A673 (cell line): ENCODE measurements at regions of chr1 and their contacts with region 1.

Region 1: DNA sequence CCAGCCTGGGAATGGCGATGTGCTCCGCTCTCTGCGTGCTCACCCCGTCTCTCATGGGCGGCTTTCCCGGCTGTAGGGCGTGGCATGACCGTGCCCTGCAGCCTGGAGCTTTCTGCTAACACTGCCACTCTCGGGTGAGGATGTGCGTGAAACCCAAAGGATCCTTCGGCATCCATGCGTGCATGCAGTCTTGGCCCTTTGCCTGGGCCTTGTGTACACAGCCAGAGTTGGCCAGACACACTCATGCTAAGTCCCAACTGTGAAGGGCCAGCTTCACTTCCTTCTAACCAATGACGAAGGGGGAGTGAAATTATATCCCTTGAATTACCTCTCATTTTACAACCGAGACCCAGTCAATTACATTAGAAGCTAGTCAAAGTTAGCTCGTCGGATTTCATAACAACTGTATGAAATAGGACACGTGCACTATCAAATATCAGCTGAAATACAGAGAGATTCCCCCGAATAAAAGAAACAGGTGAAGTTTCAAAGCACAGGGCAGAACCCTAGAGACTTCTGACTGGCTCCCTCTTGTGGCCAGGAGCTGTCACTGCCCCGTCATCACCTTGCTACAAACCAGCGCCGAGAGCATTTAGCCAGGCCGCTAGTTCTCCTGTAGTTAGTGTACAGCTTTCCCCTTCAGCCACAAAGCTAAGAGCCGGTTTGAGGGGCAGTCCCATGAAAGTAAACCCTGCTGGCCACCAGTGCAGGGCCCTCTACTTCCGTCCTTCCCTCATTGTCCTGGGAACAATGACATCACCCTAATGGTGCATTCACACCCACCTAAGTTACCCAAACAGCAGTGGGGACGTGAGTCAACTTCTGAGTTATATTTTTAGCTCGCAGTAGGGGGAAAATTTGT is 63.4 kb upstream of the COA6 start:
- DNase-seq: peak; percentile 69
- H3K4me3 ChIP-seq: no peak overlapping the region
- H3K27ac ChIP-seq: peak overlapping the region; percentile 51
- H3K4me1 ChIP-seq: peaks cover 23% of the 10 kb centered on the region
- H3K27me3 ChIP-seq: no peaks in the 10 kb centered on the region
- CTCF ChIP-seq: peak; percentile 98

Region 2: GRCh38 chr1:233587958-233588799 is 721.6 kb before region 1 on chr1:
- CTCF ChIA-PET with region 1: no interaction called
- POLR2A ChIA-PET with region 1: no interaction called
- intact Hi-C with region 1: no loop called
- DNase-seq: no peak
- H3K4me3 ChIP-seq: no peak overlapping the region
- H3K27ac ChIP-seq: no peak overlapping the region
- H3K4me1 ChIP-seq: no peaks in the 10 kb centered on the region
- H3K27me3 ChIP-seq: peaks cover 23% of the 10 kb centered on the region
- CTCF ChIP-seq: no peak

Region 3: DNA sequence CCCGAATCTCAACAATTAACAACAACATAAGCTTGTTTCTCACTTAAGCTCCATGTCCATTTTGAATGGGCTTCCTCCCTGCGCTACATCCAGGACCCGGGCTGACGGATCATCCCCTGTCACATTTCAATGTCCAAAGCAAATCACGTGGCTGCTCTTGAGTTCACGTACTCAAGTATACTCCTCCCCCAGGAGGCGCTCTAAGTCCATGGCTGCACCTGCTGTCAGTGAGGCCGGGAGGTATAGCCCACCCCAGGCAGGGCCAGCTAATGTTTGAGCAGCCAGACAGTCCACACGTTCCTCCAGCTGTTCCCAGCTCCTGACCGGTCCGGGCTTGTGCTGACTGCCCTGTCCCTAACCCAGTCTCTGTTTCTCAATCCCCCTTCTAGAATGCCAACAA is 184.5 kb before region 1 on chr1:
- CTCF ChIA-PET with region 1: interaction called, 11 read pairs
- POLR2A ChIA-PET with region 1: no interaction called
- intact Hi-C with region 1: no loop called
- DNase-seq: peak; percentile 67
- H3K4me3 ChIP-seq: no peak overlapping the region
- H3K27ac ChIP-seq: no peak overlapping the region
- H3K4me1 ChIP-seq: no peaks in the 10 kb centered on the region
- H3K27me3 ChIP-seq: no peaks in the 10 kb centered on the region
- CTCF ChIP-seq: peak; percentile 64

Region 4: GRCh38 chr1:234154320-234155251 is 155.2 kb before region 1 on chr1:
- CTCF ChIA-PET with region 1: no interaction called
- POLR2A ChIA-PET with region 1: no interaction called
- intact Hi-C with region 1: loop called (anchors 2 kb)
- DNase-seq: peak; percentile 90
- H3K4me3 ChIP-seq: no peak overlapping the region
- H3K27ac ChIP-seq: no peak overlapping the region
- H3K4me1 ChIP-seq: no peaks in the 10 kb centered on the region
- H3K27me3 ChIP-seq: no peaks in the 10 kb centered on the region
- CTCF ChIP-seq: peak; percentile 76

Region 5: DNA sequence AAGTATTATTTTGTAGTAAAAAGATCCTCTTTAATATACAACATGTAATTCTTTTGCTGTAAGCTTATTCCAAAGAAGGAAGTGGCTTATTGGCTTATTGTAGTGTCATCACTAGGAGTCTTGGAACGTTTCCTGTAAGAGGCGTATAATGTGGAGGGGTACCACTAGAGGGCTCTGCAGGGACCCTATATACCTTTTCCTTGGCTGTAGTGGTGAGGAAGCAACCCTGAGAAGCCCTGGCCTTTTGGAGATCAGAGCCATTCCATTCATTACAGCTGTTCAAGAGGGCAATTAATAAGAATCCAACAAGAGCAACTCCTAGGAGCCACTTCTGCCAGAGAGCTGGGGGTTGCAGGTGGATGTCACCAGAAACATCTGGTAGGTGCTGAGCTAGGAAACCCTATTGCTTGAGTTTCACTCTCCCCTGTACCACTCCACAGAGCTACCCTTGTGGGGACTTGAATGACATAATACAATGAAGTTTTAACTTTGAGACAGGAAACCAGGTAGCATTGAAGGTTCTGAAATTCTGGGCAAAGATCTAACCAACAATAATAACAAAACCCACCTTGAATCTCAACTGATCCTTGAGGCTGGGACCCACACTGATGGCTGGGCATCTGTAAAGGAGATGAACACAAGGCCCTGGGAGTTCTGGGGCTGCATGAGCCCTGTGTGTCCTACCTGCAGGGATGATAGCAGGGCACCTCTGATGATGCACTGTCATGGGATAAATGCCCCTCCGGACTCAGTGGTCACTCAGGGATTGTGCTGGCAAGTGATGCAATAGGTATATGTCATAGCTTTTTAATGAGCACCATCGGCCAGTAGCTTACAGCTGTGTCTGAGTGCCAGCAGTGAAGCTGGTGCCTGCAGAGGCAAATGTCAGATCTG is 96.8 kb before region 1 on chr1:
- CTCF ChIA-PET with region 1: interaction called, 28 read pairs
- POLR2A ChIA-PET with region 1: no interaction called
- intact Hi-C with region 1: no loop called
- DNase-seq: peak; percentile 93
- H3K4me3 ChIP-seq: peak overlapping the region; percentile 83
- H3K27ac ChIP-seq: peak overlapping the region; percentile 66
- H3K4me1 ChIP-seq: peaks cover 40% of the 10 kb centered on the region
- H3K27me3 ChIP-seq: no peaks in the 10 kb centered on the region
- CTCF ChIP-seq: peak; percentile 95

Region 6: DNA sequence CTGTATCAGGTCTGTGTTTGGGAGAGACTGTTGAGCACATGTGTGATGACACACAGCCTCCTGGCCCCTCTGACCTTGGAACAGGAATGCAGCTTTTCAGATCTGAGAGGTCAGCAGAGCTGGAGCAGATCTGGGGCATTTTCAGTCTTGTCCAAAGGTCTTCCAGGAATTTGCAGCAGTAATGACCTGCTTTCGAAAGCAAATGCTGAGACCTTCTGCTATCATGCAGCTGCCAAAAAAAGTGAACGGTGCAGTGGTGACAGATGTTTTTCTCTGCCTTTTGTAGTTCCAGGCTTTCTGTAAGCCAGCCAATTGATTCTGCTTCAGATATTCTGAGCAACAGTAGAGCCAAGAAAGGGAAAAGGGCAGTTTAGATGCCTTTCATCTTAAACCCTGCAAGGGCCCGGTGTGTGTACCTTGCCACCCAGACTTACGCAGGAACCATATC is 74.4 kb before region 1 on chr1:
- CTCF ChIA-PET with region 1: no interaction called
- POLR2A ChIA-PET with region 1: no interaction called
- intact Hi-C with region 1: no loop called
- DNase-seq: no peak
- H3K4me3 ChIP-seq: no peak overlapping the region
- H3K27ac ChIP-seq: no peak overlapping the region
- H3K4me1 ChIP-seq: no peaks in the 10 kb centered on the region
- H3K27me3 ChIP-seq: no peaks in the 10 kb centered on the region
- CTCF ChIP-seq: no peak

Region 7: DNA sequence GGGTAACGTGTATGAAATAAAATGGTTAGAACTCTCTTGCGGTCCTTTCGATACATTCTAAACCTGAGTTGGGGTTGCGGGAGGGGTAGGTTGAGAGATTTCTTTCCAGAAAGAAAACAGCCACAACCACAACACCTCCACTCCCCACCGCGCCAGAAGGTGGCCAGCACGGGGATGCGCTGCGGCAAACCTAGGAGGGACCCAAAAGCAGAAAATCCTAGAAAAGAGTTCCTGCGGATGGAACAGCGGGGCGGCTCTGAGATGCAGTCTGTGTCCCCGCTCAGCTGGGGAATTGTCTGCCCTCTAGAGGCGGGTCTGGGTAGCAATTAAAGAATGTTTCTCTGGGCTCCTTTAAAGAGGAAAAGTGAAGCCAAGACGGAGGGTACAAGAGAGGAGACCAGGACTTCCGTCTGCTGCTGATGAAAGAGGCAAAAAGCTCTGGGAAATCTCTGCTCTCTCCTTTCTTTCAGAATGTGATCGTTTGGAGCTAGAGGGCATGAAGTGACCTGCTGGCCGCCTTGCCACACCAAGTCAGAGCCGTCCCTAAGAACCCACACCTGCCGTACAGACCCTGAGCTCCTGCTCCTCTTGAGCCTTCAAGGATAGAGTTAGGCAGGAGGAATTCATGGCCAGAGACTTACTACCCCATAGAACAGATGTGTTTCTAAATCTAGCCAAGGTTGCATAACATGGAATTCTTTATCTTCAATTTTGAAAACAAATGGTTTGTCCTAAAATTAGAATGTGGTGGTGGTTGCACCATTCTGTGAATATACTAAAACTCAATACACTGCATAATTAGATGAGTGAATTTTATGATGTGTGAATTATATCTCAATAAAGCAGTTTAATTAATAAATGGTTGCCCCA is 16.9 kb after region 1 on chr1:
- CTCF ChIA-PET with region 1: interaction called, 13 read pairs
- POLR2A ChIA-PET with region 1: no interaction called
- intact Hi-C with region 1: no loop called
- DNase-seq: peak; percentile 85
- H3K4me3 ChIP-seq: no peak overlapping the region
- H3K27ac ChIP-seq: no peak overlapping the region
- H3K4me1 ChIP-seq: peaks cover 5% of the 10 kb centered on the region
- H3K27me3 ChIP-seq: no peaks in the 10 kb centered on the region
- CTCF ChIP-seq: peak; percentile 90